ENCODE measurements at regions of chr4 and their contacts with region 1.

Region 1: DNA sequence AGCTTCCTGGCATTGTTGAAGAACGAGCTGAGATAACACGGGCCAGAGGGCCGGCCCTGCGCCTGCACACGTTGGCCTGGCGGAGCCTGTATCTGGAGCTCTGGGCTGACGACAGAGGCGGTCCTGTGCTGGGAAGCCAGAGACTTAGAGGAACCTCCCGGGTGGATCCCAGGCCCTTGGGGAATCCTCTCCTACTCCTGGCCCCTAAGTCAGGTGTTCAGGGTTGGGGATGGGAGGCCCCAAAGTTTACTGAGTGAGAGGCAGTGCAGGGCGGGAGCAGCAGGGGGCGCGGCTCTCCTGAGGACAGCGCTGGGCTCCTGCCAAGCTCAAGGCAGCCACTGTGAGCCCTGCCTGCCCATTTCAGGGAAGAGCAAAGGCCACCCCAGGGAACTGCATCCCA is 2.5 kb upstream of the HTRA3 start:
- DNase-seq: peak; percentile 52
- ATAC-seq: peak; percentile 83
- H3K4me3 ChIP-seq: no peak overlapping the region
- H3K27ac ChIP-seq: no peak overlapping the region
- H3K4me1 ChIP-seq: peaks cover 28% of the 10 kb centered on the region
- H3K27me3 ChIP-seq: peaks cover 11 to 57% of the 10 kb centered on the region in 2 experiments
- CTCF ChIP-seq: peak; percentile 92
- EP300 ChIP-seq: no peak
- POLR2A ChIP-seq: no peak
- RAD21 ChIP-seq: peak; percentile 91

Region 2: DNA sequence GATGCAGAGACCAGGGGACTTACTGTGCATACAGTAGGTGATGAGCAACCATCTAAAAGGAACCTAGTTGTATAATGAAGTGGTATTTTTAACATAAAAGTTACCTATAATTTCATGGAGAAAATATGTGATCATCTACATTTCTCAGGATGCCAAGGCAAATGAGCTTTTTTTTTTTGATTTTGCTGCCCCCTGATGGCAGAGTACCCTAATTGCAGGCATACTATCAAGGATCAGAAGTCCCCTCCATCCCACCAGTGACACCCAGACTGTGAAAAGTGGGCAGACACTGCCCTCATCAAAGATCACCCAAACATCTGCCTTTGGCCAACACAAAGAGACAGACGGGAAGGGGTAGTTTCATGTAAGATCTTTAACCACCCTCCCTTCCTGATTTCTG is 98.8 kb before region 1 on chr4:
- CTCF ChIA-PET with region 1: no interaction called
- POLR2A ChIA-PET with region 1: no interaction called
- in situ Hi-C with region 1: no loop called
- intact Hi-C with region 1: no loop called
- DNase-seq: no peak
- ATAC-seq: no peak
- H3K4me3 ChIP-seq: no peak overlapping the region
- H3K27ac ChIP-seq: no peak overlapping the region
- H3K4me1 ChIP-seq: no peaks in the 10 kb centered on the region
- H3K27me3 ChIP-seq: peaks cover 8 to 52% of the 10 kb centered on the region in 2 experiments; a peak in 3 of 5 replicates
- CTCF ChIP-seq: no peak
- EP300 ChIP-seq: no peak
- POLR2A ChIP-seq: no peak
- RAD21 ChIP-seq: no peak

Region 3: DNA sequence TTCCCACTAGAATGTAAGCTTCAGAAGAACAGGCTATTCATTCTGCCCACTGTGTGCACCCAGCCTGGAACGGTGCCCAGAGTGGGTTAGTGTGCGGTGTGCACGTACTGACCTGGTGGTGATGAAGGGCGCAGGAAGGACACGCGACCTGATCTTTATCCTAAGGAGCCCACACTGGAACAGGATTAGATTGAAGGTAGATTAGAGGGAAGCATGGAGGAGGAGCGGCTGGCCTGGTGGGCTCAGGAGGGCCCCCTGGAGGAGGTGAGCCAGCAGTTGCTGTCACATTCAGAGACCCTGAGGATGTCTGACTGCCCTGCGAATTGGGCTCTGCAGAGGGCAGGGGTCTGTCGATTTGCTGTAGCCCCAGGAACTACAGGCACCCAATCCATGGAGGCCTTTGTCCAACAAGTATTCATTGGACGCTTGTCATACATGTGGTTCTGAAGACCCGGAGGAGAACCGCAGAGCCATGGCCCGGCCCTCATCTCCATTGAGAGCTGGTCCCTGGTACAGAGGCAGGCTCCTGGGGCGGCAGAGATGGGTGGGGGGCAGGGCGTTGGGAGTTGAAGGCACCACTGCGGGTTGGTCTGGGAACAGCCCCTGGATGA is 75.7 kb after region 1 on chr4:
- CTCF ChIA-PET with region 1: no interaction called
- POLR2A ChIA-PET with region 1: no interaction called
- in situ Hi-C with region 1: no loop called
- intact Hi-C with region 1: loop called (anchors 1 kb)
- DNase-seq: no peak
- ATAC-seq: peak; percentile 59
- H3K4me3 ChIP-seq: no peak overlapping the region
- H3K27ac ChIP-seq: no peak overlapping the region
- H3K4me1 ChIP-seq: peaks cover 29% of the 10 kb centered on the region
- H3K27me3 ChIP-seq: peaks cover 7 to 31% of the 10 kb centered on the region in 2 experiments; a peak in 4 of 5 replicates
- CTCF ChIP-seq: peak; percentile 61
- EP300 ChIP-seq: no peak
- POLR2A ChIP-seq: no peak
- RAD21 ChIP-seq: no peak

Measured in HepG2 (cell line).